ENCODE measurements at regions of chr12 and their contacts with region 1.

Region 1: DNA sequence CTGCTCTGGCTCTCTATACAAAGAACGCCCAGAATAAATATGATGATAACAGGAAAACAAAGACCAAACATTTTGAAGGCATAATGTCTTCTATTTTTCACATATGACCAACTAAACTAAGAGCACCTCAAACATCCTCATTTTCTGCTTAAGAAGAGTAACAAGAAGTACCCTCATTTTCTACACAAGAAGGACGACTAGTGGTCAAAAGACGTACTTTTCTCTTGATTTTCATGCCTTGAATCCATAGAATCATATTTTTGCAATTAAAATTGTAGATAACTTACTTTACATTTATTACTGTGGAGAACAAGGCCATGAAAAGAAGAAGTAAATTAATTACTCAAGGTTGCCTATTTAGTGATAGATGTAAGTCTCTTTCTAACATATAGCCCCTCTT is 358.6 kb downstream of the DUSP6 start:
- DNase-seq: peak; percentile 43
- H3K4me3 ChIP-seq: no peak overlapping the region
- H3K27ac ChIP-seq: no peak overlapping the region
- H3K4me1 ChIP-seq: no peaks in the 10 kb centered on the region
- H3K27me3 ChIP-seq: no peaks in the 10 kb centered on the region
- CTCF ChIP-seq: peak; percentile 58 to 65

Region 2: GRCh38 chr12:88111074-88111652 is 882.5 kb before region 1 on chr12:
- CTCF ChIA-PET with region 1: no interaction called
- dilution Hi-C with region 1: no loop called
- in situ Hi-C with region 1: loop called in 1 of 2 experiments (anchors 25 kb)
- intact Hi-C with region 1: loop called (anchors 1 kb)
- DNase-seq: peak; percentile 48
- H3K4me3 ChIP-seq: peak overlapping the region in 2 of 3 experiments; percentile 36 to 44
- H3K27ac ChIP-seq: peak overlapping the region; percentile 57
- H3K4me1 ChIP-seq: peaks cover 4% of the 10 kb centered on the region
- H3K27me3 ChIP-seq: no peaks in the 10 kb centered on the region
- CTCF ChIP-seq: peak; percentile 49 to 51

Region 3: GRCh38 chr12:88401155-88401554 is 592.5 kb before region 1 on chr12:
- CTCF ChIA-PET with region 1: no interaction called
- dilution Hi-C with region 1: no loop called
- in situ Hi-C with region 1: no loop called
- intact Hi-C with region 1: loop called (anchors 10 kb)
- DNase-seq: peak; percentile 43
- H3K4me3 ChIP-seq: no peak overlapping the region
- H3K27ac ChIP-seq: no peak overlapping the region
- H3K4me1 ChIP-seq: peaks cover 17% of the 10 kb centered on the region
- H3K27me3 ChIP-seq: no peaks in the 10 kb centered on the region
- CTCF ChIP-seq: no peak

Region 4: DNA sequence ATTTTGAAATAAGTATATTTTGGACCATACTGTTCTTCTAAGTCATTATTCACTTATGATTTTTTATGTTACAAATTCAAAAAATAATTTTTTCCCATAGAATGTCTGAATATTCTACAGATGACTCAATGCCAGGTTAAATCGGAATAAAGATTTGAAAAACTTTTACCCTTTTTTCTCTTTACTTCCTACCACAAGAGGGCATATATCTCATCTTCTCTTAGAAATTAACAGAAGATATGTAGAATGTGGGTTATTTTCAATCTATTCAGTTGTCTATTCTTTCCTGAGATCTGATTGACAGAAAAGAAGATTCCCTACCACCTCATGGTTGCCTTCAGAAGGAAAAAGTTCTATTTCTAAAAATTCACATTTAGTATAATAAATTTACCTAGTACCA is 360.3 kb before region 1 on chr12:
- CTCF ChIA-PET with region 1: no interaction called
- dilution Hi-C with region 1: no loop called
- in situ Hi-C with region 1: loop called in 1 of 2 experiments (anchors 10 kb)
- intact Hi-C with region 1: loop called (anchors 1 kb)
- DNase-seq: no peak
- H3K4me3 ChIP-seq: no peak overlapping the region
- H3K27ac ChIP-seq: no peak overlapping the region
- H3K4me1 ChIP-seq: no peaks in the 10 kb centered on the region
- H3K27me3 ChIP-seq: no peaks in the 10 kb centered on the region
- CTCF ChIP-seq: peak; percentile 18 to 47

Region 5: GRCh38 chr12:88781909-88782308 is 211.7 kb before region 1 on chr12:
- CTCF ChIA-PET with region 1: no interaction called
- dilution Hi-C with region 1: no loop called
- in situ Hi-C with region 1: no loop called
- intact Hi-C with region 1: loop called (anchors 1 kb)
- DNase-seq: peak; percentile 66
- H3K4me3 ChIP-seq: no peak overlapping the region
- H3K27ac ChIP-seq: peak overlapping the region; percentile 45
- H3K4me1 ChIP-seq: peaks cover 18% of the 10 kb centered on the region
- H3K27me3 ChIP-seq: no peaks in the 10 kb centered on the region
- CTCF ChIP-seq: no peak

Measured in mammary epithelial cell (primary cell).